ENCODE measurements at regions of chr17 and their contacts with region 1.

Region 1: GRCh38 chr17:41678907-41679739 is 9.6 kb upstream of the EIF1 start:
- DNase-seq: no peak
- H3K4me3 ChIP-seq: no peak overlapping the region
- H3K27me3 ChIP-seq: peaks cover 1% of the 10 kb centered on the region; the same call in 1 of the 2 replicates
- CTCF ChIP-seq: peak; percentile 19; the same call in 1 of the 2 replicates

Region 2: GRCh38 chr17:41659427-41660212 is 19.5 kb before region 1 on chr17:
- CTCF ChIA-PET with region 1: interaction called, 18 read pairs
- POLR2A ChIA-PET with region 1: no interaction called
- DNase-seq: no peak
- H3K4me3 ChIP-seq: no peak overlapping the region
- H3K27me3 ChIP-seq: no peaks in the 10 kb centered on the region
- CTCF ChIP-seq: no peak

Measured in BJ (cell line).